ENCODE measurements at regions of chr20 and their contacts with region 1.

Region 1: GRCh38 chr20:3204124-3204822 is at the start of gene DDRGK1:
- DNase-seq: peak; percentile 93
- ATAC-seq: peak; percentile 93
- H3K4me3 Mint-ChIP-seq: peak within 1 kb of the TSS; percentile 97
- H3K27ac Mint-ChIP-seq: peak within 1 kb of the TSS; percentile 94
- H3K4me1 Mint-ChIP-seq: peaks cover 22% of the 10 kb centered on the region
- H3K27me3 Mint-ChIP-seq: no peaks in the 10 kb centered on the region
- CTCF ChIP-seq: no peak
- total RNA-seq, gene DDRGK1: 37.1 and 46.1 TPM in 2 replicates

Region 2: GRCh38 chr20:2558581-2559278 is 645.5 kb before region 1 on chr20:
- CTCF ChIA-PET with region 1: no interaction called
- POLR2A ChIA-PET with region 1: no interaction called
- intact Hi-C with region 1: no loop called
- DNase-seq: no peak
- ATAC-seq: no peak
- H3K4me3 Mint-ChIP-seq: no peak overlapping the region
- H3K27ac Mint-ChIP-seq: no peak overlapping the region
- H3K4me1 Mint-ChIP-seq: no peaks in the 10 kb centered on the region
- H3K27me3 Mint-ChIP-seq: peaks cover 48% of the 10 kb centered on the region
- CTCF ChIP-seq: no peak

Region 3: DNA sequence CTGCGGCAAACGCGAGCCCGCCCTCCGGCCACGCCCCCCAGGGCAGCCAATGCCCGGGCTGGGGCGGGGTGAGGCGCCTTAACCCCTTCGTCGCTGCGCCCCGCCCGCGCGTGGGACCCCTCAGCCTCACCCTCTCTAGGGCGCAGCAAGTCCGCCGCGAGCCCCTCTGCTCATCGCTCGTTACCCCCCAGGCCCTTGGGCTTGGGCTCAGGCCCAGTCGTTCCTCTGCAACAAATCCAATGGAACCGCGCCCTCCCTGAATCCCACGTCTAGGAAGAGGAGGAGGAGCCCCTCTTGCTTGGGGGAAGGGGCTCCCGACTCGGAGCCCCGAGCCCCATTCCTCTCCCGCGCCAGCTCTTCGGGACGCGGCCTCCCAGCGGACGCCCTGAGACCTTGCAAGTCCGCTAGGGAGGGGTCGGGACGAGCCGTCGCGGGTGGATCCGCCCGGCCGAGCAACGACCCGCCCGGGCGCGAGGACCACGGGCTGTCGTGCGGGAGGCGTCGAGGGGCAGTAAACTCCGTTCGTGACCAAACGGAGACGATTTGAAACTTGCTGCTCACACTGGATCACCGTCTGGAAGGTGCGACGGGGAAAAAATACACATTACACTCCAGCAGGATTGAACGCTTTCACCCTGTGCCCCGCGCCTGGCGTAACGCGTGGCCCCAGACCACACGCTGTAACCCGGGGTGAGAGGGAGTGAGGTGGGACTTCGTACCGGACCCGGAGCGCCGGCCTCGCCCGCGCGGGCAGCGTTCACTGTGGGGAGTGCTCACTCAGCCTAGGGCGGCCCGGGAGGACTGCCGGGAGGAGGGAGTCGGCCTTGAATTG is 30.4 kb before region 1 on chr20:
- CTCF ChIA-PET with region 1: no interaction called
- POLR2A ChIA-PET with region 1: interaction called, 3 read pairs
- intact Hi-C with region 1: loop called (anchors 2 kb)
- DNase-seq: peak; percentile 93
- ATAC-seq: peak; percentile 32
- H3K4me3 Mint-ChIP-seq: peak overlapping the region; percentile 82
- H3K27ac Mint-ChIP-seq: no peak overlapping the region
- H3K4me1 Mint-ChIP-seq: peaks cover 16% of the 10 kb centered on the region
- H3K27me3 Mint-ChIP-seq: peaks cover 30% of the 10 kb centered on the region
- CTCF ChIP-seq: no peak

Region 4: GRCh38 chr20:3820048-3820900 is 616.0 kb after region 1 on chr20 and contains the start of gene AP5S1:
- CTCF ChIA-PET with region 1: no interaction called
- POLR2A ChIA-PET with region 1: no interaction called
- intact Hi-C with region 1: no loop called
- DNase-seq: peak; percentile 95
- ATAC-seq: peak; percentile 88
- H3K4me3 Mint-ChIP-seq: peak within 1 kb of the TSS; percentile 92
- H3K27ac Mint-ChIP-seq: peak within 1 kb of the TSS; percentile 97
- H3K4me1 Mint-ChIP-seq: peaks cover 20% of the 10 kb centered on the region
- H3K27me3 Mint-ChIP-seq: no peaks in the 10 kb centered on the region
- CTCF ChIP-seq: peak; percentile 96
- total RNA-seq, gene AP5S1: 13.4 and 13.5 TPM in 2 replicates

Measured in activated B cell treated with CpG ODN at 0.5 μM for 24 hours (primary cell).